ENCODE measurements at regions of chr22 and their contacts with region 1.

Region 1: DNA sequence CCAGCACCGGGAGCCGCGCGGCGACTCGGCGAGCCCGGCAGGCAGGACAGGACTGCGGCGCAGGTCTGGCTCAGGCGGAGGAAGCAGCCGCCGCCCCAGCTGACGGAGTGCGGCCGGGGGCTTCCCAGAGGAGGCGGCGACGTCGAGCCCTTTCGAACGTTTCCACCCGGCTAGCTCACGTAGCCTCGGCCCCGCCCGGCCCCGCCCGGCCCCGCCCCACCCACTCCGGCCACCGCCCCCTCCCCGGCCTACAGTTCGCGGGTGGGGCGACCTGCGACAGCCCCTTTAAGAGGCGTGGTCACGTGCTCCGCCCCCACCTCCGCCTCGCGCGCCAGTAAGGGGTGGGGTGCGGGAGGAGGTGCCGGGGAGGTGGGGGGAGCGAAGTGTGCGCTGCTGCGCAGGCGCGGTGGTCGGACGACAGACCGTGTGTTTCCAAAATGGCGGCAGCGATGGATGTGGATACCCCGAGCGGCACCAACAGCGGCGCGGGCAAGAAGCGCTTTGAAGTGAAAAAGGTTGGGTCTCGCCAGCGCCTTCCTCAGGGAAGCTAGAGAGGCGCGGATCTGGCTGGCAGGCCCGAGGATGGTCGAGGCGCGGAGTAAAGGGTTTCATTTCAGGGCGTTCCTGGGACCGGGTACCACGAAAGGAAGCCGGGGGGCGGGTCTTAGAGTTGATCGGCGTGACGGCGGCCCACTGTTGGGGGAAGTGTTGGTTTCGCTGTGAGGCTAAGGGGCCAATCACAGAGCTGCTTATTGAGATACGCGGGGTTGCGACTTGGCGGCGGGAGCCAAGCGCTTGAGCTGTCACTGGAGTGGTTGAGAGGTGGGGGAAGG is at the start of gene RBX1:
- DNase-seq: peak; percentile 96 to 100 (median 99)
- ATAC-seq: peak; percentile 92
- H3K4me3 ChIP-seq: peak within 1 kb of the TSS; percentile 98
- H3K4me3 Mint-ChIP-seq: peak within 1 kb of the TSS; percentile 91 to 99 (median 98)
- H3K27ac ChIP-seq: peak within 1 kb of the TSS; percentile 99
- H3K27ac Mint-ChIP-seq: peak within 1 kb of the TSS; percentile 96 to 100 (median 99)
- H3K4me1 ChIP-seq: peaks cover 16 to 19% of the 10 kb centered on the region in 2 donors
- H3K4me1 Mint-ChIP-seq: peaks cover 20 to 43% (median 39%) of the 10 kb centered on the region in 7 donors
- H3K27me3 ChIP-seq: no peaks in the 10 kb centered on the region
- H3K27me3 Mint-ChIP-seq: no peaks in the 10 kb centered on the region
- total RNA-seq, gene RBX1: 28.9 to 91.3 (median 32.7) TPM

Region 2: GRCh38 chr22:40878922-40879321 is 72.3 kb before region 1 on chr22:
- CTCF ChIA-PET with region 1: no interaction called
- POLR2A ChIA-PET with region 1: no interaction called
- intact Hi-C with region 1: no loop called
- DNase-seq: no peak
- ATAC-seq: no peak
- H3K4me3 ChIP-seq: no peak overlapping the region
- H3K4me3 Mint-ChIP-seq: no peak overlapping the region
- H3K27ac ChIP-seq: no peak overlapping the region
- H3K27ac Mint-ChIP-seq: no peak overlapping the region
- H3K4me1 ChIP-seq: no peaks in the 10 kb centered on the region
- H3K4me1 Mint-ChIP-seq: no peaks in the 10 kb centered on the region
- H3K27me3 ChIP-seq: no peaks in the 10 kb centered on the region
- H3K27me3 Mint-ChIP-seq: no peaks in the 10 kb centered on the region

Region 3: GRCh38 chr22:40922484-40923303 is 28.5 kb before region 1 on chr22:
- CTCF ChIA-PET with region 1: interaction called, 3 read pairs
- POLR2A ChIA-PET with region 1: interaction called, 5 read pairs
- intact Hi-C with region 1: loop called (anchors 1 kb)
- DNase-seq: peak in 7 of 9 donors; percentile 51 to 73 (median 67)
- ATAC-seq: peak; percentile 92
- H3K4me3 ChIP-seq: no peak overlapping the region
- H3K4me3 Mint-ChIP-seq: peak overlapping the region in 9 of 10 donors; percentile 1 to 79 (median 37)
- H3K27ac ChIP-seq: peak overlapping the region; percentile 2
- H3K27ac Mint-ChIP-seq: peak overlapping the region in 7 of 9 donors; percentile 47 to 88 (median 68)
- H3K4me1 ChIP-seq: peaks cover 0 to 4% of the 10 kb centered on the region in 2 donors
- H3K4me1 Mint-ChIP-seq: peaks cover 3 to 10% (median 5%) of the 10 kb centered on the region in 7 donors
- H3K27me3 ChIP-seq: no peaks in the 10 kb centered on the region
- H3K27me3 Mint-ChIP-seq: no peaks in the 10 kb centered on the region

Region 4: DNA sequence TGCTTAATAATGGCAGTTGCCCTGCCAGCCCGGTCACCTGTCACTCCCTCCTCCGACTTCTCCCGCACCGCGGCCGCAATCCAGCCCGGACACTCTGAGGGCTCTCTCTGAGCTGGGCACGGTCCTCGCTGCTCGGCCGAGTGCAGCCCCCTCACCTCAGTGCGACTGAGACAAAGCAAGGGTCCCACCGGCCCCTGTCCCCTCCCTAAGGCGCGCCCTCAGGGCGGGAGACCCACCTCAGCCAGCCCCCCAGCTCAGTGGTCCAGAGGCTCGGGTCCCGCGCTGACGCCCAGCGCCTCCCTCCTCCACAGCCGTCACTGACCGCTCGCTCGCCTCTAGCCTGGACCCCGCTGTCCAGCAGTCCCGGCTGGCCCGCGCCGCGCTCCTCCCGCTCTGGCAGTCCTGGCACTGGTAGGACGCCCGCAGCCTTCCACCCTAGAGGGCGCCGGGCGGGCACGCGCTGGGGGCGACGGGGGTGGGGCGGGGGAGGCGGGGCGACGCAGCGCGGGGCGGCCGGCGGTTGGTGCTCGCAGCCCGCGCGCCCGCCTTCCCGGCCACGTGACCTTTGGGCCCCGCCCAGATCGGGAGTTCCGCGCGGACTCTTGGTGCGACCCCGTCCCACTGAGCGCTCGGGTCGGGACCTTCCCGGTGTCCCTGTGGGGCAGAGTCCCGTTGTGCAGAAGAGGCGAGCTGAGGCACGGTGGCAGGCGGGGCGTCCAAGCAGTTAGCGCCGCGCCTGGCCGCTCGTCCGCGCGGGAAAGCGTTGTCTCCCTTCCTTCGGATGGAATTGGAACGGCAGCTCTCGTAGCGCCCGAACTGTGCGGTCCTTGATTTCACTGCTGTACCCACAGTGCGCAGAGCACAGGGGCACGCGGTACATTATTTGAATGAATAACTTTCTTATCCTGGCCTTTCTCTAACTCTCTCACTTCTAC is 246.1 kb after region 1 on chr22:
- CTCF ChIA-PET with region 1: no interaction called
- POLR2A ChIA-PET with region 1: interaction called, 3 read pairs
- intact Hi-C with region 1: loop called in 1 of 2 experiments (anchors 1 kb)
- DNase-seq: peak; percentile 52 to 91 (median 72)
- ATAC-seq: peak; percentile 95
- H3K4me3 ChIP-seq: peak overlapping the region; percentile 92
- H3K4me3 Mint-ChIP-seq: peak overlapping the region; percentile 88 to 96 (median 92)
- H3K27ac ChIP-seq: peak overlapping the region; percentile 61
- H3K27ac Mint-ChIP-seq: peak overlapping the region in 8 of 9 donors; percentile 35 to 86 (median 60)
- H3K4me1 ChIP-seq: peaks cover 9 to 12% of the 10 kb centered on the region in 2 donors
- H3K4me1 Mint-ChIP-seq: peaks cover 8 to 16% (median 12%) of the 10 kb centered on the region in 7 donors
- H3K27me3 ChIP-seq: no peaks in the 10 kb centered on the region
- H3K27me3 Mint-ChIP-seq: peaks cover 0 to 38% (median 0%) of the 10 kb centered on the region in 5 donors

Region 5: GRCh38 chr22:41301105-41302020 is 350.2 kb after region 1 on chr22 and contains the start of gene ZC3H7B:
- CTCF ChIA-PET with region 1: no interaction called
- POLR2A ChIA-PET with region 1: interaction called, 3 read pairs
- intact Hi-C with region 1: loop called in 1 of 2 experiments (anchors 1 kb)
- DNase-seq: peak; percentile 73 to 89 (median 83)
- ATAC-seq: peak; percentile 98
- H3K4me3 ChIP-seq: peak within 1 kb of the TSS; percentile 22
- H3K4me3 Mint-ChIP-seq: peak within 1 kb of the TSS; percentile 67 to 91 (median 85)
- H3K27ac ChIP-seq: peak within 1 kb of the TSS; percentile 82
- H3K27ac Mint-ChIP-seq: peak within 1 kb of the TSS; percentile 72 to 96 (median 87)
- H3K4me1 ChIP-seq: peaks cover 13 to 15% of the 10 kb centered on the region in 2 donors
- H3K4me1 Mint-ChIP-seq: peaks cover 19 to 35% (median 32%) of the 10 kb centered on the region in 7 donors
- H3K27me3 ChIP-seq: no peaks in the 10 kb centered on the region
- H3K27me3 Mint-ChIP-seq: no peaks in the 10 kb centered on the region
- total RNA-seq, gene ZC3H7B: 36.9 to 65.9 (median 42.7) TPM

Region 6: DNA sequence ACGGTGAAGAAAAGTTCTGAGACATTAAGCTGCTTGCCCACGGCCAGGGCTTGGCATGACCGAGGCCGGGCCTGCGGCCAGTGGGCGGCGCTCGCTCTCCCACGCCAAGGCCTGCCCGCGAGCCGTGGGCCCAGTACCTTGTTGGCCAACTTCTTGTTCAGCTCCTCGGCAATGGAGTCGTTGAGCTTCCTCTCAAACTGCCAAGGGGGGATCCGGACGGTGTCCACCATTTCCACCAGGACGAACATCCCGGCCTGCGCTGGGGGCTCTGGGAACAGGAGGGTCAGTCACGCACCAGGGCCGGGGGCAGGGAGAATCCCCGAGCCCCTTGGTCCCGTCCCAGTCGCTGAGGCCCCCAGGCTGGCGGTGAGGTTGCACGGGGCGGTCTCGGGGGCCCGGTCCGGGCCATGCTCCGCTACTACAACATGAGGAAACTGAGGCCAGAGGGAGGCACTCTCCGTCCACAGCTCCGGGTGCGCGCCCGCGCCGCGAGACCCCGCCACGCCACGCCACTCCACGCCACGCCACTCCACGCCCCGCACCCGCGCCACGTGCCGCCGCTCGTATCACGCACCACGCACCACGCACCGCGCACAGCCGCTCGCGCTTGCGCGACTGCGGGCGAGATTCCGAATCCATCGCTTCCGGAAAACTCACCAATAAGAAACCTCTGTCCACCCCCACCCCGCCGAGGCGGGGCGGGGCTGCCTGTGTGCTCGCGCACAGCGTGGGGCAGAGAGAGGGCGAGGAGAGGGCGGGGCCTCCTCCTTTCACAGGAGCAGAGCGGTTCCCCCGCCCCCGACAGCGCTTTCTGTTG is 592.9 kb after region 1 on chr22 and contains the start of gene POLR3H:
- CTCF ChIA-PET with region 1: no interaction called
- POLR2A ChIA-PET with region 1: no interaction called
- intact Hi-C with region 1: loop called in 1 of 2 experiments (anchors 1 kb)
- DNase-seq: peak; percentile 89 to 97 (median 95)
- ATAC-seq: peak; percentile 100
- H3K4me3 ChIP-seq: peak within 1 kb of the TSS; percentile 96
- H3K4me3 Mint-ChIP-seq: peak within 1 kb of the TSS; percentile 82 to 100 (median 97)
- H3K27ac ChIP-seq: peak within 1 kb of the TSS; percentile 84
- H3K27ac Mint-ChIP-seq: peak within 1 kb of the TSS; percentile 88 to 98 (median 95)
- H3K4me1 ChIP-seq: peaks cover 7 to 15% of the 10 kb centered on the region in 2 donors
- H3K4me1 Mint-ChIP-seq: peaks cover 30 to 52% (median 45%) of the 10 kb centered on the region in 7 donors
- H3K27me3 ChIP-seq: no peaks in the 10 kb centered on the region
- H3K27me3 Mint-ChIP-seq: no peaks in the 10 kb centered on the region
- total RNA-seq, gene POLR3H: 21.7 to 59.6 (median 28.5) TPM

Measured in naive thymus-derived CD4-positive, alpha-beta T cell (primary cell).